CD4-positive, alpha-beta T cell (primary cell): ENCODE measurements at regions of chr5 and their contacts with region 1.

Region 1: DNA sequence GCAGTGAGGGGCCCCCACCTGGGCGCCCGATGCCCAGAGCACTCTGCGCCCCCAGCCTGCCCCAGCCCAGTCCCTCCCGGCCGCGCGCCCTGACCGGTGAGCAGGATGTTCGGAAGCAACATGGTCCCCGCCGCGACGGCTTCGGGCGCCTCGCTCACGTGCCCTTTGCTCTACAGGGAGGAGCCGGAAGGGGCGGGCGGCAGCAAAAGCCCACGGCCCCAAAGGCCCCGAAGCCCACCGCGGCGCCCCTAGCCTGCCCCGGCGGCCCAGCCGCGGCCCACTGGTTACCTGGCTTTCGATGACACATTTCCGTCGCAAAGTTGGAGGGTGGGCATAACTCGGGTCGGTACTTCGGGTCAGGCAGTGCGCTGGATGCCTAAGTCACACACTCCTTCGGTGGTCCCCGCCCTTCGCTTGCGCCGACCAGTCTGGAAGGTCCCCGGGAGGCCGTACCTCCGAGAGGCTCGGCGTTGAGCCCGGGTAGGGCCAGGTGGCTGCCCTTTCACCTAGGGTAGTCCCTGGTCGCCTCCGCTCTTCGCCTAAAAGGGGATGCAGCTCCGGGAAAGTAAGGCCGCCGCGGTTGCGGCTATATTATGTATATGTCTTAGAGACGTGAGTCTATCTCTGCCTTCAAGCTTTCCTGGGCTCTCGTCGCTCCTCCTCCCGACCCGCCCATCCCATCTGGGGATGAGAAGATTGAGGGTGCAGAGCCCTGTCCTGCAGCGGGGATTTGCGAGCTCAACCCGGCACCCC is at the starts of genes AK6, RAD17 and TAF9:
- DNase-seq: peak; percentile 83 to 95 (median 88)
- ATAC-seq: peak; percentile 86
- H3K4me3 ChIP-seq: peak within 1 kb of the TSS; percentile 90
- H3K4me3 Mint-ChIP-seq: peak within 1 kb of the TSS; percentile 99
- H3K27ac ChIP-seq: peak within 1 kb of the TSS; percentile 94 to 98
- H3K27ac Mint-ChIP-seq: peak within 1 kb of the TSS; percentile 98
- H3K4me1 ChIP-seq: peaks cover 20% of the 10 kb centered on the region
- H3K4me1 Mint-ChIP-seq: peaks cover 55% of the 10 kb centered on the region
- H3K27me3 ChIP-seq: no peaks in the 10 kb centered on the region
- H3K27me3 Mint-ChIP-seq: no peaks in the 10 kb centered on the region
- CTCF ChIP-seq: no peak
- total RNA-seq, gene AK6: 8.2 to 10.6 TPM
- total RNA-seq, gene RAD17: 15.7 to 19.1 TPM
- total RNA-seq, gene TAF9: 53.8 to 54.2 TPM

Region 2: DNA sequence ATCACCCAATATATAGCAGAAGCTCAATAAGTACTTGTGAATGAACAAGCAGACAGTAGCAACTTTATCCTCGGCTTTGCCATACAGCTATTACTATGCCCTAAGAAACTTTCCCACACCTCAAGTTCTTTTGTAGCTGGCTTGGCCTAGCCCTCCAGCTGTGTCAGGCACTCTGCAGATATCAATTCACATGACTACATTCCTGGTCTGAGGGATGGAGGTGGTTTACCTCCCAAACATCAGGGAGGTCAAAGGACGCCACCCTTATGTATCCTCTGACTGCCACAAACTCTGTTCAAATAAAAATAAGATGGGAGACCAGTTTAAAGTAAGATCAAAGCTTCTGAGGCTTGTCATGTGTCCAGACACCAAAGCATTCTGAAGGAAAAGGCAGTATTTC is 737.7 kb before region 1 on chr5:
- CTCF ChIA-PET with region 1: no interaction called
- POLR2A ChIA-PET with region 1: no interaction called
- intact Hi-C with region 1: no loop called
- DNase-seq: no peak
- ATAC-seq: no peak
- H3K4me3 ChIP-seq: no peak overlapping the region
- H3K4me3 Mint-ChIP-seq: no peak overlapping the region
- H3K27ac ChIP-seq: no peak overlapping the region
- H3K27ac Mint-ChIP-seq: no peak overlapping the region
- H3K4me1 ChIP-seq: no peaks in the 10 kb centered on the region
- H3K4me1 Mint-ChIP-seq: no peaks in the 10 kb centered on the region
- H3K27me3 ChIP-seq: no peaks in the 10 kb centered on the region
- H3K27me3 Mint-ChIP-seq: peaks cover 6% of the 10 kb centered on the region
- CTCF ChIP-seq: no peak

Region 3: DNA sequence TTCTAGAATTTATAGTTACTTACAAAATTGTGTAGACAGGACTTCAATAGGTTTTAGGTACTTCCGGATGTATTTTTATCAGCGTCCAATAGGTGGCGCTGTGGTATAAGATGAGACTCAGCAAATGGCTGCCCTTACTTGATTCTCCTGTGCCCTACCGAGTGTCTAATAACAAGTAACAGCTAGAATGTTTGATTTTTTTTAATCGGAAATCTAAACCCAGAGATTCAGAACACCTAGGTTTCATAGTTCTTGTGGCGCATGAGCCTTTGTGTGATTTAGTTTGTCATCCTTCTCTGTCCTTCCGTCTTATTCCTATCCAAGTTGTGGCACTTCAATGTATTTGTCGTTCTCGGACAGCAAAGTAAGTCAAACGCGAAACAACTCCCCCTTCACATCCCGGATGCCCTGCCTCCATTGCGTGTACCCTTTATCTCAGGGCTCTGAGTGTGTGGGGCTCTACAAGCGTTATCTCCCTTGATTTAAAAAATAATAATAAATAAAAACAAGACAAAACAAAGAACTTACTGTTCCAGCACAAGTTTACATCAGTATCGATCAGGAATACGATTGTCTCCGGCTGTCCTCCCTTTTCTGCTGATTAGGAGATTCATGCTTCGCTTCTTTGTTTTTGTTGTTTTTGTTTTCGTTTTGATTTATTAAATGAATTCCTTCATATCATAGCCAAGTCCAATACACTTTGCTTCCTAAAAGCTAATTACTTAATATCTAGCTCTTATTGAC is 326.5 kb before region 1 on chr5:
- CTCF ChIA-PET with region 1: interaction called, 4 read pairs
- POLR2A ChIA-PET with region 1: no interaction called
- intact Hi-C with region 1: loop called in 1 of 2 experiments (anchors 5 kb)
- DNase-seq: peak; percentile 49 to 95 (median 76)
- ATAC-seq: peak; percentile 96
- H3K4me3 ChIP-seq: peak overlapping the region; percentile 54
- H3K4me3 Mint-ChIP-seq: peak overlapping the region; percentile 83
- H3K27ac ChIP-seq: peak overlapping the region; percentile 15 to 43
- H3K27ac Mint-ChIP-seq: peak overlapping the region; percentile 82
- H3K4me1 ChIP-seq: no peaks in the 10 kb centered on the region
- H3K4me1 Mint-ChIP-seq: no peaks in the 10 kb centered on the region
- H3K27me3 ChIP-seq: no peaks in the 10 kb centered on the region
- H3K27me3 Mint-ChIP-seq: no peaks in the 10 kb centered on the region
- CTCF ChIP-seq: peak; percentile 82

Region 4: GRCh38 chr5:69166686-69167492 is 202.7 kb before region 1 on chr5 and contains the start of gene CCNB1:
- CTCF ChIA-PET with region 1: no interaction called
- POLR2A ChIA-PET with region 1: no interaction called
- intact Hi-C with region 1: loop called in 1 of 2 experiments (anchors 2 kb)
- DNase-seq: peak; percentile 92 to 98 (median 96)
- ATAC-seq: peak; percentile 100
- H3K4me3 ChIP-seq: peak within 1 kb of the TSS; percentile 80
- H3K4me3 Mint-ChIP-seq: peak within 1 kb of the TSS; percentile 93
- H3K27ac ChIP-seq: peak within 1 kb of the TSS in 1 of 2 donors; percentile 46
- H3K27ac Mint-ChIP-seq: peak within 1 kb of the TSS; percentile 73
- H3K4me1 ChIP-seq: peaks cover 16% of the 10 kb centered on the region
- H3K4me1 Mint-ChIP-seq: peaks cover 23% of the 10 kb centered on the region
- H3K27me3 ChIP-seq: no peaks in the 10 kb centered on the region
- H3K27me3 Mint-ChIP-seq: no peaks in the 10 kb centered on the region
- CTCF ChIP-seq: no peak
- total RNA-seq, gene CCNB1: 1.4 to 1.5 TPM

Region 5: GRCh38 chr5:69217548-69218526 is 151.7 kb before region 1 on chr5:
- CTCF ChIA-PET with region 1: no interaction called
- POLR2A ChIA-PET with region 1: no interaction called
- intact Hi-C with region 1: loop called in 1 of 2 experiments (anchors 2 kb)
- DNase-seq: peak; percentile 85 to 99 (median 94)
- ATAC-seq: peak; percentile 91
- H3K4me3 ChIP-seq: peak overlapping the region; percentile 89
- H3K4me3 Mint-ChIP-seq: peak overlapping the region; percentile 95
- H3K27ac ChIP-seq: peak overlapping the region; percentile 88 to 93
- H3K27ac Mint-ChIP-seq: peak overlapping the region; percentile 98
- H3K4me1 ChIP-seq: peaks cover 5% of the 10 kb centered on the region
- H3K4me1 Mint-ChIP-seq: peaks cover 36% of the 10 kb centered on the region
- H3K27me3 ChIP-seq: no peaks in the 10 kb centered on the region
- H3K27me3 Mint-ChIP-seq: no peaks in the 10 kb centered on the region
- CTCF ChIP-seq: no peak

Region 6: GRCh38 chr5:69234457-69235268 is 134.9 kb before region 1 on chr5 and contains the start of gene CDK7:
- CTCF ChIA-PET with region 1: no interaction called
- POLR2A ChIA-PET with region 1: interaction called, 11 read pairs
- intact Hi-C with region 1: loop called (anchors 5 kb)
- DNase-seq: peak; percentile 80 to 96 (median 89)
- ATAC-seq: peak; percentile 99
- H3K4me3 ChIP-seq: peak within 1 kb of the TSS; percentile 90
- H3K4me3 Mint-ChIP-seq: peak within 1 kb of the TSS; percentile 95
- H3K27ac ChIP-seq: peak within 1 kb of the TSS; percentile 74 to 75
- H3K27ac Mint-ChIP-seq: peak within 1 kb of the TSS; percentile 86
- H3K4me1 ChIP-seq: peaks cover 23% of the 10 kb centered on the region
- H3K4me1 Mint-ChIP-seq: peaks cover 40% of the 10 kb centered on the region
- H3K27me3 ChIP-seq: no peaks in the 10 kb centered on the region
- H3K27me3 Mint-ChIP-seq: no peaks in the 10 kb centered on the region
- CTCF ChIP-seq: no peak
- total RNA-seq, gene CDK7: 30.1 to 33.0 TPM

Region 7: GRCh38 chr5:69502767-69503488 is 133.4 kb after region 1 on chr5:
- CTCF ChIA-PET with region 1: no interaction called
- POLR2A ChIA-PET with region 1: no interaction called
- intact Hi-C with region 1: no loop called
- DNase-seq: no peak
- ATAC-seq: no peak
- H3K4me3 ChIP-seq: no peak overlapping the region
- H3K4me3 Mint-ChIP-seq: no peak overlapping the region
- H3K27ac ChIP-seq: no peak overlapping the region
- H3K27ac Mint-ChIP-seq: no peak overlapping the region
- H3K4me1 ChIP-seq: no peaks in the 10 kb centered on the region
- H3K4me1 Mint-ChIP-seq: no peaks in the 10 kb centered on the region
- H3K27me3 ChIP-seq: peaks cover 0 to 15% of the 10 kb centered on the region in 2 experiments
- H3K27me3 Mint-ChIP-seq: peaks cover 21% of the 10 kb centered on the region
- CTCF ChIP-seq: no peak